IMR-90 (cell line): ENCODE measurements at regions of chr10 and their contacts with region 1.

Region 1: DNA sequence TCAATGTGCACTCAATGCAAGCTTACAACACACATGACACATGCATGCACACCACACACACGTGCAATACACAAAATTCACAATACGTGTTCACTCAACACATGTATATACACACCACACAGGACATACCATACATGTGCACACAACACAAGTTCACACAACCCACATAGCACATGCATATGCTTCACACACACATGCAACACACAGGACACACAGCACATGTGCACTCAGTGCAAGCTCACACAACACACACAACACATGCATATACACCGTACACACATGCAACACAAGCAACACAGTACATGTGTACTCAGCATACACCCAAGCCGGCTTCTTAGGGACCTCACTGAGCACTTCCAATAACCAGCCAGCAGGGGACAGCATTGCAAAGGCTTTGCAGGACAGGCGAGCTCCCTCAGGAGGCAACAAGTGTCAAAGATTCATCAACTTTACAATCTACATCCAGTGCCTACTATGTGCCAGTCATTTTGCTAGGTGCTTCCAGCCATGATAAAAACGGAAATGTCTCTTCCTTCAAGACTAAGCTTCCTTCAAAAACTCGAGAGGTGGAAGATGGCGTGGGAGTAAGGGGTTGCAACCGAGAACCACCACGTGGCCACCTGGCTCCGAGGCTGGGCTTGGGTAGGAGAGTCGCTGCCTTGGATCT is 61.1 kb downstream of the JCAD start:
- DNase-seq: peak; percentile 82
- ATAC-seq: peak; percentile 78
- H3K4me3 ChIP-seq: no peak overlapping the region
- H3K27ac ChIP-seq: no peak overlapping the region
- H3K4me1 ChIP-seq: peaks cover 21% of the 10 kb centered on the region
- H3K27me3 ChIP-seq: peaks cover 4% of the 10 kb centered on the region
- CTCF ChIP-seq: peak; percentile 99
- POLR2A ChIP-seq: 0 out of 2 replicates have a peak, but pooled peaks have one; percentile 29
- RAD21 ChIP-seq: peak; percentile 100

Region 2: DNA sequence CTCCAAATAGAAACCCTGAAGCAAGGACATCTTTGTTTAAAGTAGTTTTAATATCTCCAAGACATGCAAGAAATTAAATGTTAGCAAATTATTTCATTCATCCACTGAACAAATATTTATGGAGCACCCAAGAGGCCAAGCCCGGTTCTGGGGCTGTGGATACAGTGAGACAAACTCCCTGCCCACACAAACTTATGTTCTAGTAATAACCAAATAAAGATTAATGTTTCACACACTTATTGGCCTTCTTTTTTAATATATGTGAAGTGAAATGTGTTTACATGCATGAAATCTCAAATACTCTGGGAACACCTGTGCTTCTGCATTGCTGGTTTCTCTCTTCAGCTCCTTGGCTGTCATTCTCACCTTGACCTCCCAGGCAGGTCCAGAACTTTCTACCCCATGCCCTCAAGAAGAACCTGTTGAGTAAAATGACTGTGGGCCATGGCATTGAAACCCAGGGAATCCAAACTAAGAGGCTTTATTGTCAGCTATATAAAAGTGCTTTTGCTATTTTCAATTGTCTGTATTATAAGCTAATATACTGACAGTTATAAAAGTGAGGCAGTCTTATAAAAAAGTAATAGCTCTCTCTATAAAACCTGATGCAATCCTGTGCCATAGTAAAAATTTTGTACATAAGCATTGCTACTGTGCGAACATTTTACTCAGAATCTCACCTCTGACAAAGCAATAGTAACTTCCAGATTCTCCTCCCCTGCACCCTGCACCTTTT is 407.2 kb before region 1 on chr10:
- CTCF ChIA-PET with region 1: no interaction called
- POLR2A ChIA-PET with region 1: no interaction called
- dilution Hi-C with region 1: no loop called
- in situ Hi-C with region 1: no loop called
- intact Hi-C with region 1: loop called (anchors 5 kb)
- DNase-seq: no peak
- ATAC-seq: no peak
- H3K4me3 ChIP-seq: no peak overlapping the region
- H3K27ac ChIP-seq: no peak overlapping the region
- H3K4me1 ChIP-seq: peaks cover 27% of the 10 kb centered on the region
- H3K27me3 ChIP-seq: no peaks in the 10 kb centered on the region
- CTCF ChIP-seq: no peak
- POLR2A ChIP-seq: no peak
- RAD21 ChIP-seq: no peak

Region 3: GRCh38 chr10:29926693-29927048 is 71.6 kb before region 1 on chr10:
- CTCF ChIA-PET with region 1: no interaction called
- POLR2A ChIA-PET with region 1: no interaction called
- dilution Hi-C with region 1: no loop called
- in situ Hi-C with region 1: no loop called
- intact Hi-C with region 1: loop called (anchors 1 kb)
- DNase-seq: peak; percentile 73
- ATAC-seq: peak; percentile 95
- H3K4me3 ChIP-seq: no peak overlapping the region
- H3K27ac ChIP-seq: no peak overlapping the region
- H3K4me1 ChIP-seq: peaks cover 4% of the 10 kb centered on the region; the same call in 1 of the 2 replicates
- H3K27me3 ChIP-seq: peaks cover 14% of the 10 kb centered on the region
- CTCF ChIP-seq: peak; percentile 79
- POLR2A ChIP-seq: no peak
- RAD21 ChIP-seq: peak; percentile 80

Region 4: GRCh38 chr10:30379983-30380382 is 381.7 kb after region 1 on chr10:
- CTCF ChIA-PET with region 1: interaction called, 4 read pairs
- POLR2A ChIA-PET with region 1: no interaction called
- dilution Hi-C with region 1: no loop called
- in situ Hi-C with region 1: no loop called
- intact Hi-C with region 1: loop called (anchors 2 kb)
- DNase-seq: no peak
- ATAC-seq: no peak
- H3K4me3 ChIP-seq: no peak overlapping the region
- H3K27ac ChIP-seq: no peak overlapping the region
- H3K4me1 ChIP-seq: peaks cover 2% of the 10 kb centered on the region; the same call in 1 of the 2 replicates
- H3K27me3 ChIP-seq: peaks cover 9% of the 10 kb centered on the region
- CTCF ChIP-seq: no peak
- POLR2A ChIP-seq: no peak
- RAD21 ChIP-seq: no peak

Region 5: DNA sequence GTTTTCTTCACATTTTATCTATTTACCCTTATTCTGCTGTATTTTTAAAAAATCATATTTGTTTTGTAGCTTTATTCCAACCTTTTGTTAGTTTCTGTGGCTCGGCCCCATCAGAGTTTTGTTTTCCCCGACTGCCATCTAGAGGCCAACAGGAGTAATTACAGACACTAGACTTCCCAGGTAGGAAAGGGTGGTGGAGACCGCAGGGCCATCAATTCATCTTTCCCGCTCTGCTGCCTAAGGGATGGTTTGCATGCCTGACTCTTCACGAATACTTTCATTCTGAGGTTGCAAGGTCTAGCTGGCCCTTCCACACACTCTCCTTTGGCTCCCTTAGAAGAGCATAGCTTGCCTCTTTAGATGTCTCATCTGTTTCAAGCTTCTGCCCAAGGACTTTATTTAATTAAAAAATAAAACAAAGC is 593.0 kb after region 1 on chr10:
- CTCF ChIA-PET with region 1: interaction called, 3 read pairs
- POLR2A ChIA-PET with region 1: no interaction called
- dilution Hi-C with region 1: no loop called
- in situ Hi-C with region 1: loop called (anchors 10 kb)
- intact Hi-C with region 1: no loop called
- DNase-seq: peak; percentile 53
- ATAC-seq: peak; percentile 85
- H3K4me3 ChIP-seq: no peak overlapping the region
- H3K27ac ChIP-seq: no peak overlapping the region
- H3K4me1 ChIP-seq: no peaks in the 10 kb centered on the region
- H3K27me3 ChIP-seq: peaks cover 32% of the 10 kb centered on the region
- CTCF ChIP-seq: peak; percentile 82
- POLR2A ChIP-seq: no peak
- RAD21 ChIP-seq: peak; percentile 77